ENCODE measurements at regions of chr20 and their contacts with region 1.

Region 1: DNA sequence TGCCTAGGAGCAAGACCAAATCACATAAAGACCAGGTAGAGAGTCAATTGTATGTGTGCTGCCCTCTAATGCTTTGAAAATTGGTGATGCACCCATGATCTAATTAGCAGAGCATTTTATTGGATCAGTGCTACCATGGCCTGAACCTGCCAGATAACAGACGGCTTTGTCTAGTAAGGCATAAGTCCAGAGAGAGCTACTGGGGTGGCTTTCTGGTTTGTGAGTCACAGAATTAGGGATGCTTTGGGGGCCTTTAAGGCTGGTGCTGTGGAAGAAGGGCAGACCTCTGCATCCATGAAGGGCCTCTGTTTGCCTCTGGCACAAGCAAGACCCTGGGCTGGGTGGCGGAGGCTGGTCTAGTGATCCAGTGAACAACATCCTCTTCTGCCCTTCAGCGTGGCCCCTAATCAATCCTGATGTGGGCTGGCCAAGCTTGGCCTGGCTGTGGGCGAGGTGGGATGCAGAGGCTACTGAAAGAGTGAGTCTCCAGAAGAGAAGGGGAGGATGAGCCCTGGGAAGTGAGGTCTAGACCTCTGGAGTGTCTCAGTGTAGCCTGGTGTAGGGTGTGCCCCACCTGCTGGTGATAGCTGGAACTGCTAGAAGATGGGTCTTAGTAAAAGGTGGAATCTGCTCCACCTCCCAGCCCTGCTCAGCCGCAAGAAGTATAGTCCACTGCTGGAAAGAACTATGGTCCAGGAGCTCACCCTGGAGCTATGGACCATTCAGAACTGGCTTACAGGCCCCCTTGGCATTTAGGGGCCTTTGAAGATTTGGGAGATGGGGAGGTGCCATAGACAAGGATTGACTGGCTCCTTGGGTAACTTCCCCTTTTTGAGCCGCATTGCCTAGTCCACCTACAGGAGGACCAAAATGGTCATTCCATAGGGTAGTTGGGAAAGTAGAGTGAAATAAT is 36.7 kb upstream of the AAR2 start:
- DNase-seq: peak; percentile 26 to 90
- H3K4me3 ChIP-seq: no peak overlapping the region
- H3K27ac ChIP-seq: no peak overlapping the region
- H3K4me1 ChIP-seq: no peaks in the 10 kb centered on the region
- H3K27me3 ChIP-seq: no peaks in the 10 kb centered on the region
- CTCF ChIP-seq: peak; percentile 85 to 93 (median 89)

Region 2: DNA sequence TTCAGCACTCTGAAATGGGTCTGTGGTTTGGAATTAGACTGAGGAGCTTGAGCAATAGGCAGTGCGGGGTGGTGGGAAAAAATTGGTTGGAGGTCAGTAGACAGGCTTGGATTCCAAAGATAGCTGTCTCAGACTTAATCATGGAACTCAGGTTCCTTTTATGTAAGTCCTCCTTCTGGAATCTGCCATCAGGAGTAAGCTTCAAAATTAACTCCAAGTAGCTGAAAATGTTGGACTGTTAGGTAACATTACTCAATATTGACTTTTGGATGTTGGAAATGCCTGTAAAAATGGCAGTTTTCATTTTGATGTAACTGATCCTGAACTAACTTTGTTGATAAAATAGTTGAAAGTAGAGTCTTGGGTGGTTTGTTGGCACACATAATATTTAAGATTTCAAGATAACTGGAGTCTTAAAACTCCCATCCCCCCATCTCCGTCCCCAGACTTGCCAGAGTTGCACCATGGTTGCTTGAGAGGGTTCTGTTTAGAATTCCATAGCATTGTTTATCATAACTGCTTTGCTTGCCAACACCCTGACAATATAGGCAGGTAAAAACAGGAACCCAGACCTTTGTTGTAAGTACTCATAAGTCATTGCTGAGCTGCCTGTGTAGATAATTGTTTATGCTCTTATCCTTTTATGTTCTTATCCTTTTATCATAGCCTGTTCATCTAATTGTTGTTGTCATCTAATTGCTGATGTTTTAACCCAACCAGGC is 344.7 kb before region 1 on chr20:
- intact Hi-C with region 1: no loop called
- DNase-seq: no peak
- H3K4me3 ChIP-seq: no peak overlapping the region
- H3K27ac ChIP-seq: no peak overlapping the region
- H3K4me1 ChIP-seq: peaks cover 0 to 2% of the 10 kb centered on the region in 2 donors
- H3K27me3 ChIP-seq: no peaks in the 10 kb centered on the region
- CTCF ChIP-seq: no peak

Region 3: DNA sequence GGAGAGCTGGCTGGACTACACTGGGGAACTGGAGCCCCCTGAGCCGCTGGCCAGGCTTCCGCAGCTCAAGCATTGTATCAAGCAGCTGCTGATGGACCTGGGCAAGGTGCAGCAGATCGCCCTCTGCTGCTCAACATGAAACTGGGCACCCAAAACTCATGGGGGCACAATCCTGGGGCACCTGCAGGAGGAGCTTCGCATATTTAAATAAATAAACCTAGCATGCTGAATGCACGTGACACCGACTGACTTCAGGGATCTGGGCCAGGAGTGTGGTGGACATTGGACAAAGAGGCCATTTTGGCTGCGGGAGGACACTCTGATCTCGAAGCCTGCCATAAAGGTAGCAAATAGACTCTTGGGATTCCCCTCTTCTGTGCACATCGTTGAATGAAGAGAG is 252.1 kb before region 1 on chr20:
- intact Hi-C with region 1: no loop called
- DNase-seq: no peak
- H3K4me3 ChIP-seq: no peak overlapping the region
- H3K27ac ChIP-seq: peak overlapping the region in 1 of 2 donors; percentile 51
- H3K4me1 ChIP-seq: peaks cover 0 to 15% of the 10 kb centered on the region in 2 donors
- H3K27me3 ChIP-seq: no peaks in the 10 kb centered on the region
- CTCF ChIP-seq: no peak

Region 4: GRCh38 chr20:35994994-35995453 is 204.6 kb before region 1 on chr20:
- intact Hi-C with region 1: loop called (anchors 1 kb)
- DNase-seq: peak in 1 of 2 donors; percentile 88
- H3K4me3 ChIP-seq: no peak overlapping the region
- H3K27ac ChIP-seq: no peak overlapping the region
- H3K4me1 ChIP-seq: no peaks in the 10 kb centered on the region
- H3K27me3 ChIP-seq: no peaks in the 10 kb centered on the region
- CTCF ChIP-seq: peak; percentile 80 to 87 (median 81)

Region 5: DNA sequence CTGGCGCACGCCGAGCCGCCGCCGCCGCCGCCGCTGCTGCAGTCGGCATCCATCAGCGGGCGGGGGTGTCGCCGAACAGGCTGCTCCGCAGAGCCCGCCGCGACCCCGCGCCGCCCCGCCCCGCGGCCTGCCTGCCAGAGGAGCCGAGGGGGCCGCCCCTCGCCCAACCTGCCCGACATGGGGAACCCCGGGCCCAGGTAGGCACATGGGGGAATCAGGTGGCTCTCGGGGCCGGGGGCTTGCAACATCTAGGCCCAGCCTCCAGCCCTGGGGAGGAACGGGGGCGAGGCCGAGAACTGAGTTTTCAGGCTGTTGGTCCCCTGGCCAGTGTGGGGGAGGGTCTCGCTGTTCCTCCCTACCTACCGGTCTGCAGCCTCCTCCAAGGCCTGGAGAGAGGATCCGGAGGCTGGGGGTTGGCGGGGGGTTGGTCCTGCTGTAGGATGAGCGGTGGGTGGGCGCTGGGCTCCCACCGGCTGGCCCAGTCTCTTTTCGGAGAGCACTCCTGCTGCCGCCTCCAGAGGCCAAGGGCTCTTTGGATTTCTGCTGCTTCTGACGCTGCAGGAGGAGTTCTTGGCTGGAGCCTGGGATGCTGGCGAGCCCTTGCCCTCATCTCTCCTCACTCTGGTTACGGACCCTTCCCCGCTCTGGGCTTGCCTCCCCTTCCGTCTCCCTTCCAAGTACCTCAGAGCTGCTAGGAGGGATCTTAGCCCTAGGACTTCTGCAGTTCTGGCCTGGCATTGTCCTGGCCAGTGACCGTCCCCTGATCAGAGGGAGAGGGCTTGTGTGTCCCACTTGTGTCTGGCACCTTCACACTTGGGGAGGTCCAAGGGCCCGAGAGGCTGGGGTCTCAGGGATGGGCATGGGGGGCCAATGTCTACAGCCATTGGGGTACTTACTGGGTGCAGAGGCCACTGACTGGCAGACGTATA is 44.6 kb before region 1 on chr20 and contains the start of gene EPB41L1:
- intact Hi-C with region 1: loop called (anchors 2 kb)
- DNase-seq: peak in 1 of 2 donors; percentile 74
- H3K4me3 ChIP-seq: peak within 1 kb of the TSS; percentile 65 to 91
- H3K27ac ChIP-seq: peak within 1 kb of the TSS; percentile 77 to 94
- H3K4me1 ChIP-seq: peaks cover 0 to 21% of the 10 kb centered on the region in 2 donors
- H3K27me3 ChIP-seq: no peaks in the 10 kb centered on the region
- CTCF ChIP-seq: no peak
- total RNA-seq, gene EPB41L1: 16.7 TPM

Region 6: DNA sequence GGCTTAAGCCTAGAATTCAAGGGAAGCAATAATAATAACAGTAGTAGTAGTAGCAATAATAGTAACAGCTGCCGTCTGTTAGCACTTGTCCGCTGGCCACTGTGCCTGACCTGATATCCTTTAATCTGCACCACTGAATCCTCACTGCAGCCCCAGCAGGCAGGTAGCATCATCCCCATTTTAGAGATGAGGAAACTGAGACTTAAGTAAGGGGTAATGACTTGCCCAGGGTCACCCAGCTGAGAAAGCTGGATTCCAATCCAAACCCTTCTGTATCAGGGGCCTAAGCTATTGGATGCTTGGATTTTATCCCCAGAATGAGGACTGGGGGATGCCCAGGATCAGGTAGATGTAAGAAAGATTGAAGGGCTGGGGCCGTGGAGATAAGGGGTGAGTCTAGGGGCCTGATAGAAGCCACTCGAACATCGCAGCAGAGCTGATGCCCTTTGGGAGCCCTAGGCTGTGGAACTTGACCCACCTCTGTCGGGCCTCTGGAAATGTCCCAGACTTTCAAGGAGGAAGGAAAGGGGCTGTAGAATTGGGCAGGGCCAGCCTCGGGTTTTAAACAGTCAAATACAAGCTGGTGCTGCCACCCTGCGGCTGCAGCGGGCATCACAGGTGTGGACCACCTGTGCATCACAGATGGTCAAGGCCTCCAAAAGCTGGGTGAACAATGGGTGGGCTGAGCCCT is 239.6 kb after region 1 on chr20:
- intact Hi-C with region 1: loop called (anchors 2 kb)
- DNase-seq: peak in 1 of 2 donors; percentile 75
- H3K4me3 ChIP-seq: no peak overlapping the region
- H3K27ac ChIP-seq: no peak overlapping the region
- H3K4me1 ChIP-seq: no peaks in the 10 kb centered on the region
- H3K27me3 ChIP-seq: no peaks in the 10 kb centered on the region
- CTCF ChIP-seq: peak; percentile 72 to 89 (median 87)